A673 (cell line): ENCODE measurements at regions of chr12 and their contacts with region 1.

Region 1: DNA sequence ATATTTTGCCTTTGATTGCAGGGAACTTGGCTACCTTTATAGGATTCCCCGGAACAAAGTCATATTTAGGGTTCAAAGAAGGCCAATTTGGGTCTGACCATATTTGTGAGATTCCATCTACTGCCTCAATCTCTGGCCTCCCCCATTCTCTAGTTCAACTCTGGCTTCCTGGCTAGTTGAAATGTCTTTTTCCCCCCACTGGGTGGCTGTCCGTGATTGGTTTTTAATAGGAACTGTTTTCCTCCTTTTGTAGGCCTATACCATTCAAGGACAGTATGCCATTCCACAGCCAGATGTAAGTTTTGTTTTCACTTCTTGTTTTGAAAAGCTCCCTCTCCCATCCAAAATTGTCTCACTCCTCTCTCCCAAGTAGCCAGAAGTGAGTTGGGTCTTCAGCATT is 13.8 kb downstream of the PCBP2 start:
- DNase-seq: no peak
- H3K4me3 ChIP-seq: no peak overlapping the region
- H3K27ac ChIP-seq: no peak overlapping the region
- H3K4me1 ChIP-seq: no peaks in the 10 kb centered on the region
- H3K27me3 ChIP-seq: no peaks in the 10 kb centered on the region
- CTCF ChIP-seq: no peak

Region 2: GRCh38 chr12:53025250-53025649 is 440.4 kb before region 1 on chr12:
- CTCF ChIA-PET with region 1: no interaction called
- POLR2A ChIA-PET with region 1: no interaction called
- intact Hi-C with region 1: loop called (anchors 5 kb)
- DNase-seq: no peak
- H3K4me3 ChIP-seq: no peak overlapping the region
- H3K27ac ChIP-seq: no peak overlapping the region
- H3K4me1 ChIP-seq: no peaks in the 10 kb centered on the region
- H3K27me3 ChIP-seq: no peaks in the 10 kb centered on the region
- CTCF ChIP-seq: no peak

Region 3: GRCh38 chr12:53451661-53452158 is 14.0 kb before region 1 on chr12 and contains the start of gene PCBP2:
- CTCF ChIA-PET with region 1: no interaction called
- POLR2A ChIA-PET with region 1: no interaction called
- intact Hi-C with region 1: no loop called
- DNase-seq: peak; percentile 100
- H3K4me3 ChIP-seq: peak within 1 kb of the TSS; percentile 94
- H3K27ac ChIP-seq: peak within 1 kb of the TSS; percentile 99
- H3K4me1 ChIP-seq: peaks cover 18% of the 10 kb centered on the region
- H3K27me3 ChIP-seq: no peaks in the 10 kb centered on the region
- CTCF ChIP-seq: peak; percentile 97
- total RNA-seq, gene PCBP2: 1,194 and 1,215 TPM in 2 replicates

Region 4: GRCh38 chr12:53550595-53550994 is 84.9 kb after region 1 on chr12:
- CTCF ChIA-PET with region 1: no interaction called
- POLR2A ChIA-PET with region 1: interaction called, 12 read pairs
- intact Hi-C with region 1: no loop called
- DNase-seq: no peak
- H3K4me3 ChIP-seq: no peak overlapping the region
- H3K27ac ChIP-seq: no peak overlapping the region
- H3K4me1 ChIP-seq: peaks cover 19% of the 10 kb centered on the region
- H3K27me3 ChIP-seq: no peaks in the 10 kb centered on the region
- CTCF ChIP-seq: no peak

Region 5: GRCh38 chr12:53613821-53614220 is 148.1 kb after region 1 on chr12:
- CTCF ChIA-PET with region 1: no interaction called
- POLR2A ChIA-PET with region 1: no interaction called
- intact Hi-C with region 1: no loop called
- DNase-seq: no peak
- H3K4me3 ChIP-seq: no peak overlapping the region
- H3K27ac ChIP-seq: peak overlapping the region; percentile 61
- H3K4me1 ChIP-seq: peaks cover 29% of the 10 kb centered on the region
- H3K27me3 ChIP-seq: no peaks in the 10 kb centered on the region
- CTCF ChIP-seq: no peak